Head of caudate nucleus (tissue), 42 donors: ENCODE measurements at regions of chr6 and their contacts with region 1.

Region 1: DNA sequence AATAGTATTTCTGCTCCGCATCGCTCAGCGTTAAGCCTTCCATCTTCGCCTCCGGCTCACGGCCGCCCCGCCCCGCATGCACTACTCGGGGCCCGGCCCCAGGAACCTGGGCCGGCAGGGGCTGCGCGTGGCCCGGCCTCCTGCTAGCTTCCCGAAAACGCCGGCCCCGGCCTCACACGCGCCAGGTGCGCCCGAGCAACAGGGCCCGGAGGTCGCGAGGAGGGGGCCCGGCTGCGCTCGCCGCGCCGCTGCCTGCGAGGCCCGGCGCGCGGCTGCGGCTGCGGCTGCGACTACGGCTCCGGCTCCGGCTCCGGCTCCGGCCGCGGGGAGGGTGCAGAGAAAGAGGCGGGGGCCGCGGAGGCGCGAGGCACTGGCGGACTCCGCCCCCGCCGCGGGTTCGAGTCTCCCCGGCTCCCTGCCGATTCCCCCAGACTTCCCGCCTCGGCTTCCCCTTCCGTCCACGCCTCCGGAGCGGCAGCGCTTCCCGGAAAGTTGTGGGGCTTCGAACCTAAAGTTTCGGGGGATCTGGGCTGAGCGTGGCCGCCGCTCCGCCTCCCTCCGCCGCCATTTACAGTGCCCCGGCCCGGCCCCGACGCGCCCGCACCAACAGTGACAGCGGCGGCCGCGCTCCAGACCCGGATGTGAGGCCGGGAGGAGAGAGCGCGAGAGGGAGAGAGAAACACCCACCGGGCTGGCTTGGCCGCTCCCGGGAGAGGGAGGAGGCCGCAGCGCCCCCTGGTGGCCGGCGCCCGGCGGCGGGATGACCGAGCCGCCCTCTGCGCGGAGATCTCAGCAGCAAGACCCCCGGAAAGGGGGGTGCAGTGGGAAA is at the start of gene REPS1:
- DNase-seq: peak; percentile 70 to 96 (median 92)

Region 2: GRCh38 chr6:138722425-138723371 is 265.2 kb before region 1 on chr6:
- intact Hi-C with region 1: no loop called
- DNase-seq: peak in 2 of 42 donors; percentile 3 to 18

Region 3: GRCh38 chr6:138817822-138818308 is 170.0 kb before region 1 on chr6:
- intact Hi-C with region 1: loop called (anchors 5 kb)
- DNase-seq: no peak

Region 4: DNA sequence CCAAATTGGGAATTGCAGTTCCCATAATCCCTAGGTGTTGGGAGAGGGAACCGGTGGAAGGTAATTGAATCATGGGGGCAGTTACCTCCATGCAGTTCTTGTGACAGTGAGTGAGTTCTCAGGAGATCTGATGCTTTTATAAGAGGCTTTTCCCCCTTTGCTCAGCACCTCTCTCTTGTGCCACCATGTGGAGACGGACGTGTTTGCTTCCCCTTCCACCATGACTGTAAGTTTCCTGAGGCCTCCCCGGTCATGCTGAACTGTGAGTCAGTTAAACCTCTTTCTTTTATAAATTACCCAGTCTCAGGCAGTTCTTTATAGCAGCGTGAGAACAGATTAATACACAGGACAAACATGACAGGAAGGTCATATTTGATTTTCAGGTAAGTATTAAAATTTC is 121.7 kb after region 1 on chr6:
- intact Hi-C with region 1: no loop called
- DNase-seq: no peak